A549 (cell line): ENCODE measurements at regions of chr13 and their contacts with region 1.

Region 1: DNA sequence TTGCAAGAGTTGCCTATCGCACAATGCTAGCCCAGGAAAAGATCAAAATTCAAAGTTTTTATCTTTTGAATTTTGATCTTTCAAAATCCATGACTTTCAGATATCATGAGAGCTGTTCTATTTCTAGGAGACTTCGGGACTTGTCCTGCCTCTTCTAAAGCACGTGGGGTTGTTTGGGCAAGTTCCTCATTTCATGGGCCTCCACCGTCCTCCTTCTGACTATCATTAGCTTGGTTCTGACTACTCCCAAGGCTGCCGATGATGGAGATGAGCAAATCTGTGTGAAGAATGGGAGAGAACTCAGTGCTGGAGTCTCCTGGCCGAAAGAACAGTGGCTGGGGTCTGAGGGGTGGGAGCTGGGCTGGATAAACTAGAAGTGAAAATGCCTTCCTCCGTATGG is 86.5 kb downstream of the COL4A1 start:
- DNase-seq: no peak
- ATAC-seq: no peak
- H3K4me3 ChIP-seq: no peak overlapping the region
- H3K27ac ChIP-seq: no peak overlapping the region
- H3K4me1 ChIP-seq: peaks cover 3% of the 10 kb centered on the region; the same call in 1 of the 3 replicates
- CTCF ChIP-seq: no peak
- EP300 ChIP-seq: no peak
- POLR2A ChIP-seq: no peak
- RAD21 ChIP-seq: no peak

Region 2: GRCh38 chr13:110239280-110240125 is 19.0 kb after region 1 on chr13:
- CTCF ChIA-PET with region 1: interaction called, 20 read pairs
- POLR2A ChIA-PET with region 1: no interaction called
- DNase-seq: no peak
- ATAC-seq: no peak
- H3K4me3 ChIP-seq: no peak overlapping the region
- H3K27ac ChIP-seq: no peak overlapping the region
- H3K4me1 ChIP-seq: no peaks in the 10 kb centered on the region
- CTCF ChIP-seq: no peak
- EP300 ChIP-seq: no peak
- POLR2A ChIP-seq: no peak
- RAD21 ChIP-seq: no peak

Region 3: DNA sequence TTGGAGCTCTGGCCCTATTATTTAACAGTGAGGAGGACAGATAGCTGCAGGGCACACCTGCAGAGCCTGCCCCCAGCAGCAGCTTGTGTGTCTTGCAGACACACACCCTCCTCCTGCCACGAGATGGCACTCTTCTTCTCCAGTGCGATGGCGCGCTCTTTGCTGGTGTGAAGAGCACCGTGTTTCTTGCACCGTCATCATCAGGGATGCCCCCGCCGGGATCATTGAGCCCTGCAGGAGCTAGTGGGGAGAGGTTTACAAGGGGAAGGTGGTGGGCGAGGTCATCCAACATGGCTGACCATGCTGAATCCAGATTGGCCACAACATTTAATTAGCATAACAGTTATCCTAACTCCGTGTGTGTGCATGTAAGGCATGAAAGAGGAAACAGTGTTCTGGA is 235.5 kb after region 1 on chr13:
- CTCF ChIA-PET with region 1: interaction called, 14 read pairs
- POLR2A ChIA-PET with region 1: no interaction called
- DNase-seq: peak; percentile 73 to 84
- ATAC-seq: peak; percentile 95 to 98
- H3K4me3 ChIP-seq: no peak overlapping the region
- H3K27ac ChIP-seq: peak overlapping the region; percentile 62 to 80
- H3K4me1 ChIP-seq: 0 out of 3 replicates have a peak, but pooled peaks cover 4% of the 10 kb centered on the region
- CTCF ChIP-seq: peak; percentile 67
- EP300 ChIP-seq: no peak
- POLR2A ChIP-seq: no peak
- RAD21 ChIP-seq: peak; percentile 71 to 72